ENCODE measurements at regions of chr1 and their contacts with region 1.

Region 1: GRCh38 chr1:77533660-77534305 is 148.7 kb downstream of the ZZZ3 start:
- DNase-seq: peak; percentile 80
- H3K4me3 ChIP-seq: no peak overlapping the region
- H3K27ac ChIP-seq: no peak overlapping the region
- H3K4me1 ChIP-seq: peaks cover 22% of the 10 kb centered on the region
- H3K27me3 ChIP-seq: no peaks in the 10 kb centered on the region
- CTCF ChIP-seq: peak; percentile 77 to 81
- POLR2A ChIP-seq: no peak

Region 2: DNA sequence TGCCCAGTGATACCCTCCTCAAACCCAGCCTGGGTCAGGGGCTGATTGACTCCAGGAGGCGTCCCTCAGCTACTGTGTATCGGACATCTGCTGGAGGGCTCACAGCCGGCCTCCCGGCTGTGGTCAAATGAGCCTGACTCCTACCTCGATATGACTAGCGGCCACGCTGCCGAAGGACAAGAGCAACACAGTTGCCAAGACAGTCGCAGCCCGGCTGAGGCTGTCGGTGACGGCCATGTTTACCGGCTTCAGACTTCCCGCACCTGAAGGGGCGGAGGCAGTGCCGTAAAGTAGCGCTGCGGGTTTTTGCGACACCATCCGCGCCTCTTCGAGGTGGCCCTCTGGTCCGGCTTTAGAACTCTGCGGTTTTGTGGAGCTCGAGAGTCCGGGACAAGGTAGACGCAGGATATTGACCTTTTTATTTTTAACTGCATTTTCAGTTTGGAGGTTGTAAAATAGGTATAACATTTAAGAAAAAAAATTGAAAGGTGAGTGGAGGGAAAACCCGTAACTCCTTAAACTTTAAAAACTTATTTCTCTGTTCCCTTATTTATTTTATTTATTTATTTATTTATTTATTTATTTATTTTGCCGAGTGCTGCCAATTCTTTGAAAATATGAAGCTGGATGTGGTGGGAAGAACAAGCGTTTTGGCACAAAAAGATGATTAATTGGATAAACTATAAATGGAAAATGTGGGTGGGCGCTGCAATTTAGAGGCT is 314.5 kb before region 1 on chr1 and contains the start of gene PIGK:
- CTCF ChIA-PET with region 1: interaction called, 8 read pairs
- POLR2A ChIA-PET with region 1: no interaction called
- dilution Hi-C with region 1: no loop called
- intact Hi-C with region 1: loop called (anchors 2 kb)
- DNase-seq: peak; percentile 92
- H3K4me3 ChIP-seq: peak within 1 kb of the TSS; percentile 68 to 92 (median 83)
- H3K27ac ChIP-seq: peak within 1 kb of the TSS; percentile 38
- H3K4me1 ChIP-seq: peaks cover 19% of the 10 kb centered on the region
- H3K27me3 ChIP-seq: no peaks in the 10 kb centered on the region
- CTCF ChIP-seq: no peak
- POLR2A ChIP-seq: peak; percentile 46
- total RNA-seq, gene PIGK: 27.0 and 32.3 TPM in 2 replicates

Region 3: DNA sequence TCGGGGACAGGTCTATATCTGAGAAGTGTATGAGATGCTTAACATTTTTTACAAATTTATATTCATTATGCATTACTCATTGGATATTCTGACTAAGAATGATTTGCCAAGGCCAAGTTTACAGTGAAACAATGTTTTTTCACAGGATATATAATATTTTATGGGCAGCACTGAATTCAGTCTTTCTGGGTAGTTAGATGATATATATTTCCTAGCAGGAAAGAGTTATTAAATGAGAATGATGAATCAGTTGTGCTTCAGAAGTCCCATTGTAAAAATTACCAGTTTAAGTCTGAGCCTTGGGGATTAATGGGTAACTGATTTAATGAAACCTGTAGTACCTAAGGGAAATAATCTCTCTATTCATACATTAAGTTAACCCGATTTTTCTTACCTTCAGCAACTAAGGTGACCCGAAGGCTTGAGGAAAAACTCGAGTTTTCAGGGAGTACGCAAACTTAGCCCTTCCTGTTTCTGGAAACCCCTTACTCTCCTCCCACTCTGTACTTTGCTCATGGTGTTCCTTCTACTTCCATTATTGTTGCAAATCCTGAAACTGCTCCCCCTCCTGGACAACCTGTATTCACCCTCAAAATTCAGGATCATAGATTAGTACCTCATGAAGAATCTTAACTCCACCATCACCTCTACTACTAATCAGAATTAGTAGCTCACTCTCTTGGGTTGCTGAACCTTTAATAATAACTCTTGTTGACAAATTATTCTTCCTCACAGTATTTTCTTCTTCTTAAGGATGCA is 116.9 kb before region 1 on chr1:
- CTCF ChIA-PET with region 1: interaction called, 3 read pairs
- POLR2A ChIA-PET with region 1: no interaction called
- dilution Hi-C with region 1: no loop called
- intact Hi-C with region 1: loop called (anchors 2 kb)
- DNase-seq: peak; percentile 32
- H3K4me3 ChIP-seq: no peak overlapping the region
- H3K27ac ChIP-seq: no peak overlapping the region
- H3K4me1 ChIP-seq: peaks cover 14% of the 10 kb centered on the region
- H3K27me3 ChIP-seq: no peaks in the 10 kb centered on the region
- CTCF ChIP-seq: peak; percentile 27 to 28
- POLR2A ChIP-seq: no peak

Region 4: DNA sequence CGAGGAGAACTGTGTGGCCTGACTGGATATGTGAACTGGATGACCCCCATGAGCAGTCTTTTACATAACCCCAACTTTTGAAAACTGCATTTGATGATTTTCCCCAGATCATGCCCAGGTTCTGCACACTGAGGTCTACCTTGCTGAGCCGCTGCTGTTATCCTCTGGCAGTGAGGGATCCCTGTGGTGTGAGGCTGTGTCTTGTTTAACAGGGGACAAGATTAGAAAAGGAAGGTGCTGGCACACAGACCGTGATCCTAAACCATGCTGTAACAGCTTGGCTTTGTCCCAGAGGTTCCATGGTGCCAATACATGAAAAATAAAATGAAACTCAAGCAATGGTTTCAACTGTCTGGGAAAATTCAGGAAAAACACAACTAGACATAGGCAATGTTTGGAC is 14.5 kb after region 1 on chr1:
- CTCF ChIA-PET with region 1: interaction called, 13 read pairs
- POLR2A ChIA-PET with region 1: no interaction called
- dilution Hi-C with region 1: no loop called
- intact Hi-C with region 1: no loop called
- DNase-seq: no peak
- H3K4me3 ChIP-seq: no peak overlapping the region
- H3K27ac ChIP-seq: no peak overlapping the region
- H3K4me1 ChIP-seq: no peaks in the 10 kb centered on the region
- H3K27me3 ChIP-seq: no peaks in the 10 kb centered on the region
- CTCF ChIP-seq: no peak
- POLR2A ChIP-seq: no peak